T-cell (primary cell): ENCODE measurements at regions of chr17 and their contacts with region 1.

Region 1: DNA sequence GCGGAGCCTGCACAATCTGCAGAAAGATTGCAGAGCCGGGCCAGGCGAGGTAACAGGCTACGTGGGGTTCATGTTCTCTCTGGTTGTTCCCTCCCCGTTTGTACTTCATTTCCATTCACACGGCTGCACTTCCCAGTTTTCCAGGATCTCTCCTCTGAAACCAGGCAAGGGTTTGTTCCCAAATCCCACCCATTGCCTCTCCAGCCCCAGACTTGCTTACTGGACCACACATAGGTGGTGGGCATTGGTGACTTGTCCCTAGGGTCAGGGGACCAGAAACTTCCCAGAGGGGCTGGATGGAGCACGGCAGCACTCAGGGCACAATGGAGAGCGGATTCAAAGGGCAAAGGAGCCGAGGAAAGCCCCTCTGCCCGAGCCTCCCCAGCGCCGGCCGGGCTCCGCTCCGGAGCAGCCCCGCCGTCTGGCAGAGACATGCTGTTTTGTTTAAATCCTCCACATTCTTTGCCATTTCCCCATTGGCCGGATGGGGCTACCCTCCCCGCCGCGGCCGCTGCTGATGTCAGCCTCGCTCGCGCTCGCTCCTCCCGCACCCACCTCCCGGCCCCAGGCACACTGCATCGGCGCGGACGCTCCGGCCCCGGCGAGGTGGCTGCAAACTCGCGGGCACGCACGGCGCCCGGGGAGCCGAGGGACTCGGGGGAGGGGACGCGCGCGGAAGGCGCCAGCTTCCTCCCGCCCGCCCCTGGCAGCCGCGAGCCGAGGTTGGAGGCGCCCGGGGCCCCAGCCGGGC is at the start of gene PITPNC1:
- DNase-seq: peak; percentile 72 to 93 (median 84)
- ATAC-seq: peak; percentile 75 to 79 (median 77)
- H3K4me3 ChIP-seq: peak within 1 kb of the TSS; percentile 82 to 99
- H3K4me3 Mint-ChIP-seq: peak within 1 kb of the TSS; percentile 89 to 97 (median 94)
- H3K27ac ChIP-seq: peak within 1 kb of the TSS; percentile 79
- H3K27ac Mint-ChIP-seq: peak within 1 kb of the TSS; percentile 90
- H3K4me1 ChIP-seq: peaks cover 22 to 51% of the 10 kb centered on the region in 2 experiments
- H3K4me1 Mint-ChIP-seq: peaks cover 40 to 50% (median 48%) of the 10 kb centered on the region in 3 donors
- H3K27me3 ChIP-seq: no peaks in the 10 kb centered on the region
- H3K27me3 Mint-ChIP-seq: no peaks in the 10 kb centered on the region
- total RNA-seq, gene PITPNC1: 82.6 to 132 (median 111) TPM

Region 2: DNA sequence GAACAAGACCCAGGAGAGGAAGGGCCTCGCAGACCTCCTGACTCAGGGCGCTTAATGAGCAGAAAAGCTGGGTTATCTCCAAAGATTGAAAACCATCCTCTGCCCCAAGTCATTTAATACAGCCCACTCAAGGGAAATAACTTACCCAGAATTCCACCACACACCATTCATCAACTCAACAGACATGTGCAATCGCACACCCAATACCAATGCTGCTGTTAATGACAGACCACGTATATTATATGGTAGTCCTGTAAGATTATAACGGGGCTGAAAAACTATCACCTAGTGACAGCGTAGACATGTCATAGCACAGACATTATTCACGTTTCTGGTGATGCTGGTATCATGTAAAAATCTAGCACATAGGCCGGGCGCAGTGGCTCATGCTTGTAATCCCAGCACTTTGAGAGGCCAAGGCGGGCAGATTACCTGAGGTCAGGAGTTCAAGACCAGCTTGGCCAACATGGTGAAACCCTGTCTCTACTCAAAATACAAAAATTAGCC is 79.4 kb before region 1 on chr17:
- CTCF ChIA-PET with region 1: no interaction called
- POLR2A ChIA-PET with region 1: no interaction called
- DNase-seq: no peak
- ATAC-seq: no peak
- H3K4me3 ChIP-seq: no peak overlapping the region
- H3K4me3 Mint-ChIP-seq: no peak overlapping the region
- H3K27ac ChIP-seq: no peak overlapping the region
- H3K27ac Mint-ChIP-seq: no peak overlapping the region
- H3K4me1 ChIP-seq: peaks cover 0 to 8% of the 10 kb centered on the region in 2 experiments
- H3K4me1 Mint-ChIP-seq: peaks cover 0 to 6% (median 0%) of the 10 kb centered on the region in 3 donors
- H3K27me3 ChIP-seq: peaks cover 0 to 2% of the 10 kb centered on the region in 2 experiments
- H3K27me3 Mint-ChIP-seq: no peaks in the 10 kb centered on the region

Region 3: DNA sequence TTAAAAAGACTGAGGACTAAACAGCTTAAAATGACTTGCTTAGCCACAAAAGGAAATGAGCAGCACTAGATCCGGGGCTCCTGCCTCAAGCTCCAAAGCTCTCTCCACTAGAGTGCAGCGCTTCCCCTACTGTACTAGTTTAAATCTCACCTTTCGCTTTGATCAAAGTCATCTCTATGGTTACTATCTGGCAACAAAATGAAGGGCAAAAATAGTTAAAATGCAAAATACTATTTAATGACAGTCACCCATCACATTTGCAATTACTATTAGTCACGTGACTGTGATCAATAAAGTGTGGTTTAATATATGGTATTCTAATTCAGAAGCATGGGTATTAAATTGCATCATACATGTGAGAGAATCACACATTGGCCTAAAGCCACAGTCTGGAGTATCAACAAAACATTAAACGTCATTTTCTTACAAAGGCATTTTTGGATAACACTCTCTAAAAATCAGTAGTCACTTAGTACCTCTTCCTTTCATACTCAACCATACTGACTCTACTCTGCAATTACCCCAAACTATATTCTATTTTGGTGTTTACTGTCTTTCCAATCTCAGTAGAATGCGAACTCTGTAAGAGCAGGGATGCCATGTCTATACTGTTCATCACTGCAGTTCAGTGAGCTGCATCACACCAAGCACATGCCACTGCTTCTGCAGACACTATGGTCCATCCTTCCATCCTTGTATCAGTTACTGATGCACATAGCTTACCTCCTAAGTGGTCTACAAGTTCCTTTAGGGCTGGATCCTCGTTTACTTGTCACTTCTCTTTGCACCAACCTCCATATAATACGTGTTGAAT is 16.7 kb before region 1 on chr17:
- CTCF ChIA-PET with region 1: interaction called, 15 to 30 read pairs
- POLR2A ChIA-PET with region 1: no interaction called
- DNase-seq: peak in 33 of 35 experiments; percentile 33 to 79 (median 58)
- ATAC-seq: peak; percentile 86 to 99 (median 91)
- H3K4me3 ChIP-seq: no peak overlapping the region
- H3K4me3 Mint-ChIP-seq: peak overlapping the region; percentile 37 to 51 (median 43)
- H3K27ac ChIP-seq: peak overlapping the region; percentile 40
- H3K27ac Mint-ChIP-seq: peak overlapping the region; percentile 74 to 78
- H3K4me1 ChIP-seq: peaks cover 24 to 38% of the 10 kb centered on the region in 2 experiments
- H3K4me1 Mint-ChIP-seq: peaks cover 66 to 73% (median 68%) of the 10 kb centered on the region in 3 donors
- H3K27me3 ChIP-seq: no peaks in the 10 kb centered on the region
- H3K27me3 Mint-ChIP-seq: no peaks in the 10 kb centered on the region

Region 4: GRCh38 chr17:67431249-67432048 is 54.5 kb after region 1 on chr17:
- CTCF ChIA-PET with region 1: interaction called, 3 to 13 read pairs
- POLR2A ChIA-PET with region 1: interaction called in 1 of 2 experiments, 6 read pairs
- DNase-seq: peak in 1 of 35 experiments; percentile 34
- ATAC-seq: peak in 2 of 4 experiments; percentile 12 to 17
- H3K4me3 ChIP-seq: no peak overlapping the region
- H3K4me3 Mint-ChIP-seq: peak overlapping the region in 2 of 3 donors; percentile 45 to 47
- H3K27ac ChIP-seq: peak overlapping the region; percentile 67
- H3K27ac Mint-ChIP-seq: peak overlapping the region; percentile 90 to 92
- H3K4me1 ChIP-seq: peaks cover 25 to 67% of the 10 kb centered on the region in 2 experiments
- H3K4me1 Mint-ChIP-seq: peaks cover 64 to 78% (median 77%) of the 10 kb centered on the region in 3 donors
- H3K27me3 ChIP-seq: no peaks in the 10 kb centered on the region
- H3K27me3 Mint-ChIP-seq: no peaks in the 10 kb centered on the region

Region 5: DNA sequence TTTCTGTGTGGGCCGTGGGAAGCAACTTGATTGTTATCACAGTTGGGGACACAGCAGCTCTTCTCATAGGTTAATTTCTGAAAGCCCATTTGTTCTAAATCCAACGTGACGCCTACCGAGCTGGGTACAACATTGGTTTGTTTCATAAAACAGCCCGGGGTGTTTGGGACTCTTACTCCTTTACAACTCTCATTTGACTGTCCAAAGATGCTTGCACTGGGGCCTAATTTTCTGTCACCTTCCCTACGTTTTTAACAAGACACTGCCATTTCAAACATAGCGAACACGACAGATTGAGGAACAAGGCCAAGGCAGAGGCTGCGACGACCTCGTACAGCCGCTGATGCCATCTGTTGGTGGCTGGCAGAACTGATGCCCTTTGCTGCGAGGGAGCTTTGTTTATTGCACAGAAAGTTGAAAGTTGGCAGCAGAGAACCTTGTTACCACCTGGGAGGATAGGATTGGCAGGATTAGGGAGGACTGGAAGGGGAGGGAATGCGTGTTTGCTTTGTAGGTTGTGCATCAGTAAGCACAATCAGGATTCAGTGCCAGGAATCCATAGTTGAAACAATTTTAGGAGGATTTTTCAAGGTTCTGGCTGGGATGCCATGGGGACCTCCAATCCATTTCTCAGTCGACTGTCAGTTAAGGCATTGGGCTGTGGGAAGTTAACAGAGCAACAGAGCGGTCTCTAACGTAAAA is 98.5 kb after region 1 on chr17:
- CTCF ChIA-PET with region 1: interaction called, 21 to 86 read pairs
- POLR2A ChIA-PET with region 1: interaction called, 3 to 5 read pairs
- DNase-seq: peak; percentile 74 to 94 (median 83)
- ATAC-seq: peak; percentile 81 to 90 (median 82)
- H3K4me3 ChIP-seq: peak overlapping the region in 1 of 2 donors; percentile 34
- H3K4me3 Mint-ChIP-seq: peak overlapping the region; percentile 61 to 65 (median 61)
- H3K27ac ChIP-seq: peak overlapping the region; percentile 91
- H3K27ac Mint-ChIP-seq: peak overlapping the region; percentile 89 to 94
- H3K4me1 ChIP-seq: peaks cover 31 to 67% of the 10 kb centered on the region in 2 experiments
- H3K4me1 Mint-ChIP-seq: peaks cover 70 to 75% (median 74%) of the 10 kb centered on the region in 3 donors
- H3K27me3 ChIP-seq: no peaks in the 10 kb centered on the region
- H3K27me3 Mint-ChIP-seq: no peaks in the 10 kb centered on the region

Region 6: GRCh38 chr17:67689534-67690177 is 312.7 kb after region 1 on chr17:
- CTCF ChIA-PET with region 1: interaction called, 11 to 26 read pairs
- POLR2A ChIA-PET with region 1: interaction called in 1 of 2 experiments, 4 read pairs
- DNase-seq: peak in 28 of 35 experiments; percentile 2 to 76 (median 28)
- ATAC-seq: peak; percentile 45 to 60 (median 54)
- H3K4me3 ChIP-seq: no peak overlapping the region
- H3K4me3 Mint-ChIP-seq: no peak overlapping the region
- H3K27ac ChIP-seq: no peak overlapping the region
- H3K27ac Mint-ChIP-seq: no peak overlapping the region
- H3K4me1 ChIP-seq: no peaks in the 10 kb centered on the region
- H3K4me1 Mint-ChIP-seq: peaks cover 4 to 5% (median 4%) of the 10 kb centered on the region in 3 donors
- H3K27me3 ChIP-seq: no peaks in the 10 kb centered on the region
- H3K27me3 Mint-ChIP-seq: no peaks in the 10 kb centered on the region

Region 7: DNA sequence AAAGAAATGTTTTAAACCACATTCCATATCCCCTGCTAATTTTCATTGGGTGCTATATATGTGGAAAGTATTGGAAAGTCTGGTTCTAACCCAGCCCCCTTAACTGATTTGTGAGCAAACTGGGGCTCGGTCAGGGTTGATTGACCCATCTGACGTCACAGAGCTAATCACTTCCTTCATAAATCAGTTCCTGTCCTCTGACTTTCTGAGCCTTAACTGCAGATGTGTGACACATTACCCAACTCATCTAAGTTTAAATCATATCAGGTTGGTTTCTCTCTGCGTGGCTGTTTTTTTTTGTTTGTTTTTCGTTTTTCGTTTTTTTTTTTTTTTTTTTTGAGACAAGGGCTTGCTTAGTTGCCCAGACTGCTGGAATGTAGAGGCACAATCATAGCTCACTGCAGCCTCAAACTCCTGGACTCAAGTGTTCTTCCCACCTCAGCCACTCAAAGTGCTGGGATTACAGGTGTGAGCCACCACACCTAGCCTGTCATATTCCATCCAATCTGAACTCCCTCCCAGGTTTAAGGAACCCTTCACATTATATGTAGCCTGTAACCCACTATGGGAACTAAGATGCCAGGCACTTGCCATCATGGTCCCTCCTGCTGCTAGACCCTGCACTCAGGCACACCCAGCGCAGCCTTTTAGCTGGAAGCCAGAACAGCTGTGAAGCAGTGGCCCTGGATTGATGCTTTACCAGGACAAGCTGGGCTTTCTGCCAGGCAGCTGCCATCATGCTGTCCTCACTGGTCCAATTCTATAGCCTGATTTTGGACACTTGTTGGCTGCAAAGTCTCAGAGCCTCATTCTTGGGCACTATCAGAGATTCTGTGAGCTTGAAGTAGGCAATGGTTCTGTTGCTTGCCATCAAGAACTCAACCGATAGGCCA is 441.4 kb after region 1 on chr17:
- CTCF ChIA-PET with region 1: interaction called in 1 of 2 experiments, 6 read pairs
- POLR2A ChIA-PET with region 1: interaction called in 1 of 2 experiments, 12 read pairs
- DNase-seq: peak in 1 of 35 experiments; percentile 5
- ATAC-seq: no peak
- H3K4me3 ChIP-seq: no peak overlapping the region
- H3K4me3 Mint-ChIP-seq: no peak overlapping the region
- H3K27ac ChIP-seq: no peak overlapping the region
- H3K27ac Mint-ChIP-seq: no peak overlapping the region
- H3K4me1 ChIP-seq: no peaks in the 10 kb centered on the region
- H3K4me1 Mint-ChIP-seq: no peaks in the 10 kb centered on the region
- H3K27me3 ChIP-seq: peaks cover 0 to 22% of the 10 kb centered on the region in 2 experiments
- H3K27me3 Mint-ChIP-seq: peaks cover 10 to 14% of the 10 kb centered on the region in 2 donors